Heart left ventricle (tissue), 16 donors: ENCODE measurements at regions of chr11 and their contacts with region 1.

Region 1: DNA sequence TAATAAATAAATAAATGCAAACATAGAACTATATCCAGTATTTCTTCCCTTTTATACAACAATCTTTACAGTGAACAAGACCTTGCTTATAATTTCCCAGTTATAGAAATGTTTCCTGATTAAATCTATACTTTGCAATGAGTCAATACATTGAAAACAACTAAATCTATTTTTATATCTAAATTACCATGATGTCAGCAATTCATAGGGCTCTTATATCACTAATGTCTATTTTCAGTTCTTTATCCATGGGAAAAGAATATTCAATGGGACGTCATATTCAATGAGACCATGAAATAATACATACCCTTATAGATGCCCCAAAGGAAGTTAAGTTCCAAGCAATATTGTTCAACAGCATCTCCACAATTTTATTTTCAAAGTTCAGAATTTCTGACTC is 359.9 kb downstream of the CASP12 start:
- DNase-seq: no peak
- ATAC-seq: no peak
- H3K4me3 ChIP-seq: no peak overlapping the region
- H3K27ac ChIP-seq: no peak overlapping the region
- H3K4me1 ChIP-seq: no peaks in the 10 kb centered on the region
- H3K27me3 ChIP-seq: no peaks in the 10 kb centered on the region
- CTCF ChIP-seq: no peak
- POLR2A ChIP-seq: no peak

Region 2: DNA sequence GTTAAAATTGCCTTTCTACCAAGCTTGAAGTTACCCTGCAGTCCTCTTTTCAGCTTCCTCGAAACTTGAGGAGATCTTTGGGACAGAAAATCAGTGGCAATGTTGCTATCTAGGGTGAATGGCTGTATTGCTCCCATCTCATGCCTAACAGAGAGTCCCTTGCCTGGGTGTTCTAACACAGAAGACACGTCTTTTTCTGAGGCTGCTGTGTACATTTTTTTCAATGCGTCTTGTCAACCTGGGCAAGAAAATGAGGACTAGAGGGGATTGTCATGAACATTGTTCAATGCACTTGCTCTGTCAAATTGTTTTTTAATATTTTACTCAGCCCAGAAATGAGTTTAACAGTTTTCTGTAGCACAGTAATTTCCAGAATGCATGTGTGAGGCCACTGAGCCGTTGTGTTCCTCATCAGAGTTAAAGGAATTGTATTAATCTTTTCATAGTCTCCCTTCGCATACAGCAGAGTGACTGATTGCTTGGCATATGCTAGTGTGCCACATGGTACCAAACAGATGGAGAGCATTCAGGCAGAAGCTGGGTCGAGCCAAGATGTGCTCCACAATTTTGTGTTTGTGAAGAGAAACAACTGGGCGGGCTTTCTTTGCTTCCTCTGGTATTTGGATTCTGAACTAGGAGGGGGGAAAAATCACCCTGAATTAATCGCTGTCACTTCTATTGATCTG is 273.9 kb after region 1 on chr11:
- intact Hi-C with region 1: loop called in 1 of 10 experiments (anchors 5 kb)
- DNase-seq: no peak
- ATAC-seq: no peak
- H3K4me3 ChIP-seq: no peak overlapping the region
- H3K27ac ChIP-seq: no peak overlapping the region
- H3K4me1 ChIP-seq: no peaks in the 10 kb centered on the region
- H3K27me3 ChIP-seq: no peaks in the 10 kb centered on the region
- CTCF ChIP-seq: no peak
- POLR2A ChIP-seq: no peak